ENCODE measurements at regions of chr12 and their contacts with region 1.

Region 1: GRCh38 chr12:108731105-108731865 is at the start of gene CORO1C:
- DNase-seq: peak; percentile 96
- H3K4me3 Mint-ChIP-seq: peak within 1 kb of the TSS; percentile 89
- H3K27ac Mint-ChIP-seq: peak within 1 kb of the TSS; percentile 94
- H3K4me1 Mint-ChIP-seq: peaks cover 38% of the 10 kb centered on the region
- H3K27me3 Mint-ChIP-seq: peaks cover 16% of the 10 kb centered on the region
- total RNA-seq, gene CORO1C: 46.1 and 49.7 TPM in 2 replicates

Region 2: DNA sequence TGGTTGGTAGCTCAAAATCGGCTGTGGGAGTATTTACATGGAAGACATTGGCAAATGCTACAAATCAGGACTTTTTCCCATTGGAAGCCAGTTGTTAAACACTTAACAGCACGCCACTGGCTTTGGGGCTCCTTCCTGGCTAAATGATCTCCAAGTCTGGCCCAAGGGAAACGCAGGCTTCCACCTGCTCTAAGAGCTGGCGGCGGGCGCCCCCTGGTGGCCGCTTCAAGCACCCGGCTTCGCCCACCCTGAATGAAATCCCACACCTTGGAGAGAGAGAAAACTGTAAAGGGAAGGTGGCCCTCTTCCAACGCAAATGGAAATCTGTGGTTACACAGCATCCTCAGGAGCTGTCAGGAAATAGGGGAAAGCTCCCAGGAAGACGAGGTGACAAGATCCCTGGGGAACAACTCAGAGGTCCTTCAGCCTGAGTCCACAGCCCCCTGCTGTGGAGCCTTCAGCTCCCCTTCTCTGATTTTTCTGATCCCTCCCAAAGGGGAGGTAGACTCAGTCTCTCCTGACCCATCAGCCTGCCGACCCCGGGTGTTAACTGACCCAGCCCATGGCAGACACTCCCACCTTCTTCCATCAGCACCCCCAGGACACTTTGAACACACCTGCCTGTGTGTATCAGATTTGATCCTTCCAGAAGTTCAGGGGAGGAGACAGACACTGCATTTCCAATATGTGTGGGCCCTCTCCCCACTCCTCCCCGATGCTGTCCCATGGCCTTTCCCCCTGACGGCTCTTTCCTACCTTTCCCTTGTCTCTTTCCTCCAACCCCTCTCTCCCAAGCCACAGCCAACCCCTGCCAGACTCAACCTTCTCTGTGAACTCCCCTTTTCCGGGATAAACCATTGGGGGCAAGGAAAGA is 113.0 kb before region 1 on chr12:
- intact Hi-C with region 1: loop called (anchors 5 kb)
- DNase-seq: peak; percentile 69
- H3K4me3 Mint-ChIP-seq: no peak overlapping the region
- H3K27ac Mint-ChIP-seq: peak overlapping the region; percentile 57
- H3K4me1 Mint-ChIP-seq: peaks cover 57% of the 10 kb centered on the region
- H3K27me3 Mint-ChIP-seq: peaks cover 2% of the 10 kb centered on the region

Region 3: GRCh38 chr12:108664338-108665258 is 66.7 kb before region 1 on chr12:
- intact Hi-C with region 1: loop called (anchors 1 kb)
- DNase-seq: peak; percentile 79
- H3K4me3 Mint-ChIP-seq: no peak overlapping the region
- H3K27ac Mint-ChIP-seq: peak overlapping the region; percentile 72
- H3K4me1 Mint-ChIP-seq: peaks cover 17% of the 10 kb centered on the region
- H3K27me3 Mint-ChIP-seq: no peaks in the 10 kb centered on the region

Region 4: GRCh38 chr12:108856428-108857157 is 125.3 kb after region 1 on chr12:
- intact Hi-C with region 1: loop called (anchors 1 kb)
- DNase-seq: peak; percentile 45
- H3K4me3 Mint-ChIP-seq: peak overlapping the region; percentile 96
- H3K27ac Mint-ChIP-seq: peak overlapping the region; percentile 96
- H3K4me1 Mint-ChIP-seq: peaks cover 52% of the 10 kb centered on the region
- H3K27me3 Mint-ChIP-seq: peaks cover 10% of the 10 kb centered on the region